Endothelial cell of umbilical vein (primary cell): ENCODE measurements at regions of chr3 and their contacts with region 1.

Region 1: GRCh38 chr3:43690400-43691119 is at the start of gene ABHD5:
- DNase-seq: peak; percentile 97
- H3K4me3 ChIP-seq: peak within 1 kb of the TSS; percentile 62 to 88 (median 87)
- H3K27ac ChIP-seq: peak within 1 kb of the TSS; percentile 76
- H3K4me1 ChIP-seq: peaks cover 12% of the 10 kb centered on the region
- H3K27me3 ChIP-seq: peaks cover 0 to 1% of the 10 kb centered on the region in 2 experiments
- CTCF ChIP-seq: peak; percentile 17 to 55
- POLR2A ChIP-seq: peak; percentile 100
- total RNA-seq, gene ABHD5: 17.1 and 21.2 TPM in 2 replicates

Region 2: DNA sequence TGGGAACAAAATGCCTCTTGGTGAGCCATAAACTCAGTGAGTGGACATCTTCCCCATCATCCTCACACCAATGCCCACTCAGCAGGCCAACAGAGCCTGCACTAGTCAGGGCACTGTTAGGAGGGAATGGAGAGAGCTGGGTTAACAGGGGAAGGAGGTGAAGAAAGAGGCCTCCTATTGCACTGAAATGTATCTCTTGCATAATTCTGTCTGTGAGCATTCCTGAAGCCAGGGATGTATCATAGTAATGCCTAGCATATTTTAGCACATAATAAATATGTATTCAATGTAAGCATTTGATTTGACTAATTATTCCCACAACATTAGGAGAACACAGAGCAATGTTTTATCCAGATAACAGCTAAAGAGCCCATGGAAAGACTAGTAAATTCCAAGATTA is 149.9 kb before region 1 on chr3:
- CTCF ChIA-PET with region 1: interaction called, 6 read pairs
- POLR2A ChIA-PET with region 1: no interaction called
- dilution Hi-C with region 1: no loop called
- intact Hi-C with region 1: loop called (anchors 1 kb)
- DNase-seq: no peak
- H3K4me3 ChIP-seq: no peak overlapping the region
- H3K27ac ChIP-seq: no peak overlapping the region
- H3K4me1 ChIP-seq: peaks cover 3% of the 10 kb centered on the region
- H3K27me3 ChIP-seq: no peaks in the 10 kb centered on the region
- CTCF ChIP-seq: no peak
- POLR2A ChIP-seq: no peak

Region 3: DNA sequence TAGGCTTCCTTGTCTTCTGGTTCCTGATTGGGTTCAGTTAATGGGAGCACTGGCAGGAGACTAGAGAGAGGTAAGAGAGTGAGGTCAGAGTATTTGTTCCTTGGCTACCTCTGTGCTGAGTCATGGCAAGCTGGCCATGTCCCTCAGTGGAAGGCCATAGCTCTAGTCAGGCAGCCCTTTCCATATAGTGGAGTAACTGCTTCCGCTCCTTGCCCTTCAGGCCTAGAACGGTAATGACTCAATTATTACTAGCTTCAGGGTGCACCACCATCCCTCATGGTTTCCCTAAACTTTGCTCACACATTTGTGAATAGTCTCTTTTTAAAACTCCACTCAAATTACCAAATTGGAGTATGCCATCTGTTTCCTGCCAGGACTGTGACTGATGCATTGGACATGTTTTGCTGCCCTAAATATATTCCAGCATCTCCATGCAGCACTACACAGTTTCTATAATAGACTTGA is 58.3 kb before region 1 on chr3:
- CTCF ChIA-PET with region 1: no interaction called
- POLR2A ChIA-PET with region 1: no interaction called
- dilution Hi-C with region 1: no loop called
- intact Hi-C with region 1: loop called (anchors 2 kb)
- DNase-seq: peak; percentile 77
- H3K4me3 ChIP-seq: no peak overlapping the region
- H3K27ac ChIP-seq: peak overlapping the region; percentile 69
- H3K4me1 ChIP-seq: peaks cover 14% of the 10 kb centered on the region
- H3K27me3 ChIP-seq: no peaks in the 10 kb centered on the region
- CTCF ChIP-seq: no peak
- POLR2A ChIP-seq: no peak

Region 4: GRCh38 chr3:43733459-43734384 is 43.2 kb after region 1 on chr3:
- CTCF ChIA-PET with region 1: no interaction called
- POLR2A ChIA-PET with region 1: no interaction called
- dilution Hi-C with region 1: no loop called
- intact Hi-C with region 1: no loop called
- DNase-seq: peak; percentile 36
- H3K4me3 ChIP-seq: no peak overlapping the region
- H3K27ac ChIP-seq: no peak overlapping the region
- H3K4me1 ChIP-seq: peaks cover 2% of the 10 kb centered on the region
- H3K27me3 ChIP-seq: no peaks in the 10 kb centered on the region
- CTCF ChIP-seq: no peak
- POLR2A ChIP-seq: no peak

Region 5: GRCh38 chr3:43870120-43870519 is 179.6 kb after region 1 on chr3:
- CTCF ChIA-PET with region 1: no interaction called
- POLR2A ChIA-PET with region 1: no interaction called
- dilution Hi-C with region 1: no loop called
- intact Hi-C with region 1: loop called (anchors 2 kb)
- DNase-seq: peak; percentile 77
- H3K4me3 ChIP-seq: no peak overlapping the region
- H3K27ac ChIP-seq: peak overlapping the region; percentile 49
- H3K4me1 ChIP-seq: peaks cover 49% of the 10 kb centered on the region
- H3K27me3 ChIP-seq: no peaks in the 10 kb centered on the region
- CTCF ChIP-seq: no peak
- POLR2A ChIP-seq: no peak

Region 6: GRCh38 chr3:43907508-43907858 is 216.9 kb after region 1 on chr3:
- CTCF ChIA-PET with region 1: no interaction called
- POLR2A ChIA-PET with region 1: no interaction called
- dilution Hi-C with region 1: no loop called
- intact Hi-C with region 1: no loop called
- DNase-seq: no peak
- H3K4me3 ChIP-seq: no peak overlapping the region
- H3K27ac ChIP-seq: no peak overlapping the region
- H3K4me1 ChIP-seq: no peaks in the 10 kb centered on the region
- H3K27me3 ChIP-seq: peaks cover 7% of the 10 kb centered on the region in 2 experiments
- CTCF ChIP-seq: no peak
- POLR2A ChIP-seq: no peak

Region 7: DNA sequence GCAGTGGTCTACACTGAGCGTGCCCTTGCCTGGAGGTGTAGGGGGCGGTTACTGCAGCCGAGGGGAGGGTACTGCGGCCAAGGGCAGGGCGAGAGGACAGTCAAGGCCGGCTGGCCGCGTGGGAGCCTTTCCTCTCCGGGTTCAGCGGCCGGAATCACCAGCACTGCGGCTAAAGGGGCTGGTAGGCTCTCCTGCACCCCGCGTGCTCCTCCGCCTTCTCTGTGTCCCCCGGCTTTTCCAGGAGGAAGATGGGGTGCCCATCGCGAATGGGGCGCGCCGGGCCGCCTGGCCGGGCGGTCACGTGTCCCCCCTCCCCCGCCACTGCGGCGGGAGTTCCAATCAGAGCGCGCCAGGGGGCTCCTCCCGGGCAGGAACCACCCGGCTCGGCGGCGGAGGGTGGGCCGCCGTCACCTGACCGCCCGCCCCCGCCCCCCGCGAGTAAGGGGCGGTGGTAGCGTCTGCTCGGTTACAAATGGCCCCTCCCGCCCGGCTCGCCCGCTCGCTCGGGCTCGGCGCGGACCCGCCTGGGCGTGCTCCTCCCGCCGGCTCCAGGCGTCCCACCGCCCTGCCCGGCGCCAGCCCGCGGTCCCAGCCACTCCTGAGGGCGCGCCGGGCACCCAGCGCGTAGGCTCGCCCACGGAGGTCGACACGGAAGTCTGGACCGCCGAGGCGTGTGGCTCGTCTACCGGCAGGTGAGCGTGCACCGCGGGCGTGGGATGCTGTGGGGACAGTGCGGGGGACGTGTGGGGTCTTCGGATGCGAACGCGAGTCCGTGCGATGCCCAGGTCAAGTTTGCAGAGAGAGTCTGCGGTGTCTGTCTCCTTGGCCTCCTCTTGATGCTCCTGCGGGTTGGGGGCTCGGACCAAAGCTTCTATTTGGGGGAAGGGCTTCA is 308.5 kb after region 1 on chr3:
- CTCF ChIA-PET with region 1: no interaction called
- POLR2A ChIA-PET with region 1: no interaction called
- dilution Hi-C with region 1: no loop called
- intact Hi-C with region 1: loop called (anchors 5 kb)
- DNase-seq: peak; percentile 6
- H3K4me3 ChIP-seq: peak overlapping the region in 2 of 3 experiments; percentile 11 to 15
- H3K27ac ChIP-seq: no peak overlapping the region
- H3K4me1 ChIP-seq: peaks cover 29% of the 10 kb centered on the region
- H3K27me3 ChIP-seq: peaks cover 59 to 78% of the 10 kb centered on the region in 2 experiments
- CTCF ChIP-seq: no peak
- POLR2A ChIP-seq: no peak

Region 8: GRCh38 chr3:44235604-44236484 is 545.3 kb after region 1 on chr3:
- CTCF ChIA-PET with region 1: no interaction called
- POLR2A ChIA-PET with region 1: no interaction called
- dilution Hi-C with region 1: no loop called
- intact Hi-C with region 1: loop called (anchors 5 kb)
- DNase-seq: peak; percentile 96
- H3K4me3 ChIP-seq: no peak overlapping the region
- H3K27ac ChIP-seq: peak overlapping the region; percentile 57
- H3K4me1 ChIP-seq: peaks cover 12% of the 10 kb centered on the region
- H3K27me3 ChIP-seq: no peaks in the 10 kb centered on the region
- CTCF ChIP-seq: peak; percentile 59 to 86
- POLR2A ChIP-seq: no peak